Endothelial cell of umbilical vein (primary cell): ENCODE measurements at regions of chr1 and their contacts with region 1.

Region 1: DNA sequence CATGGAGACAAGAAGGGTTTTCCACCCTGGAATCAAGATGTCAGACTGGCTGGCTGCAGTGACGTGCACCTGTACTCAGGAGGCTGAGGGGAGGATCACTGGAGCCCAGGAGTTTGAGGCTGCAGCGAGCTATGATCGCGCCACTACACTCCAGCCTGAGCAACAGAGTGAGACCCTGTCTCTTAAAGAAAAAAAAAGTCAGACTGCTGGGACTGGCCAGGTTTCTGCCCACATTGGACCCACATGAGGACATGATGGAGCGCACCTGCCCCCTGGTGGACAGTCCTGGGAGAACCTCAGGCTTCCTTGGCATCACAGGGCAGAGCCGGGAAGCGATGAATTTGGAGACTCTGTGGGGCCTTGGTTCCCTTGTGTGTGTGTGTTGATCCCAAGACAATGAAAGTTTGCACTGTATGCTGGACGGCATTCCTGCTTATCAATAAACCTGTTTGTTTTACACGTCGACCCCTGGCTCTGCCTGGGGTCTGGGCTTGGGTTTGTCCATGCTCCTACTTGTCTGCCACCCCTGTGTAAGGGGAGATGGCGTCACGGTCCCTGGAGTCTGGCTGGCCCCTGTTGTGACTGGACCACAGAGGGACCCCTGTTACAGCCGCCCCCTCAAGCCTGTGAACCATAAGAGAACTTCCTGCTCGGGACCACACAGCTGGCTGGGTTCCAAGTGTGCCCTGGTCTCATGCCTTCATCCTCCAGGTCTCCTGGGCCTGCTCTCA is 20.9 kb upstream of the VPS13D start:
- DNase-seq: peak; percentile 84
- H3K4me3 ChIP-seq: no peak overlapping the region
- H3K27ac ChIP-seq: no peak overlapping the region
- H3K4me1 ChIP-seq: no peaks in the 10 kb centered on the region
- H3K27me3 ChIP-seq: no peaks in the 10 kb centered on the region
- CTCF ChIP-seq: peak; percentile 87 to 92
- POLR2A ChIP-seq: no peak

Region 2: DNA sequence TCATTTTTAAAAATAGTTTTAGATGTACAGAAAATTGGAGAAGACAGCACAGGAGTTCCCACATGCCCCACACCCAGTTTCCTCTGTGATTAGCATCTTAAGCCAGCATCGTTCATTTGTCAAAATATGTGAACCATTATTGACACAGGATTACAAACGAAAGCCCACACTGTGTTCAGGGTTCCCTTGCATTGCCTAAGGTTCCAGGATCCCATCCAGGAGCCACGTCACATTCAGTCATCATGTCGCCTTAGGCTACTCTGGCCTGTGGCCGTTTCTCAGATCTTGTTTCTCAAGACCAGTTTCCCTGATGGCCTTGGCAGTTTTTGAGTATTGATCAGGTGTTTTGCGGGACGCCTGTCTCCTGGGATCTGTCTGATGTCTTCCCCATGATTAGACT is 76.8 kb before region 1 on chr1:
- CTCF ChIA-PET with region 1: interaction called, 537 read pairs
- POLR2A ChIA-PET with region 1: interaction called, 11 read pairs
- dilution Hi-C with region 1: no loop called
- intact Hi-C with region 1: no loop called
- DNase-seq: no peak
- H3K4me3 ChIP-seq: no peak overlapping the region
- H3K27ac ChIP-seq: no peak overlapping the region
- H3K4me1 ChIP-seq: peaks cover 8% of the 10 kb centered on the region
- H3K27me3 ChIP-seq: no peaks in the 10 kb centered on the region
- CTCF ChIP-seq: no peak
- POLR2A ChIP-seq: no peak

Region 3: GRCh38 chr1:12184008-12184681 is 24.8 kb before region 1 on chr1:
- CTCF ChIA-PET with region 1: interaction called, 4 read pairs
- POLR2A ChIA-PET with region 1: no interaction called
- dilution Hi-C with region 1: no loop called
- intact Hi-C with region 1: loop called (anchors 1 kb)
- DNase-seq: peak; percentile 93
- H3K4me3 ChIP-seq: no peak overlapping the region
- H3K27ac ChIP-seq: peak overlapping the region; percentile 90
- H3K4me1 ChIP-seq: peaks cover 31% of the 10 kb centered on the region
- H3K27me3 ChIP-seq: no peaks in the 10 kb centered on the region
- CTCF ChIP-seq: peak; percentile 42 to 55
- POLR2A ChIP-seq: no peak

Region 4: DNA sequence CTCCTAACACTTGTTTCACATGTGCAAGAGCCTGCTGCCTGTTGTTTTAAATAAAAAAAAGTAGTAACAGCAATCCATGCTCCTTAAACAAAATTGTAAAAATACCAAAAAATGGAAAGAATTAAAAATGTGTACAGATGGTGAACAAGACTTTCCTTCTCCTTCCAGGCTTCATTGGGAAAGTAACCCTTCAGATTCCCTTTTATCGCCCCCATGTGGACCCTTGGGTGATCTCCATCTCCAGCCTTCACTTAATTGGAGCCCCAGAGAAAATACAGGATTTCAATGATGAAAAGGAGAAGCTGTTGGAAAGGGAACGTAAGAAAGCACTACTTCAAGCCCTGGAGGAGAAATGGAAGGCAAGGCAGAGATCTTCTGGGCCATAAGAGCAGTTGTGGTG is 35.1 kb after region 1 on chr1:
- CTCF ChIA-PET with region 1: no interaction called
- POLR2A ChIA-PET with region 1: no interaction called
- dilution Hi-C with region 1: no loop called
- intact Hi-C with region 1: loop called (anchors 1 kb)
- DNase-seq: peak; percentile 35
- H3K4me3 ChIP-seq: no peak overlapping the region
- H3K27ac ChIP-seq: no peak overlapping the region
- H3K4me1 ChIP-seq: no peaks in the 10 kb centered on the region
- H3K27me3 ChIP-seq: no peaks in the 10 kb centered on the region
- CTCF ChIP-seq: peak; percentile 53 to 62
- POLR2A ChIP-seq: no peak

Region 5: DNA sequence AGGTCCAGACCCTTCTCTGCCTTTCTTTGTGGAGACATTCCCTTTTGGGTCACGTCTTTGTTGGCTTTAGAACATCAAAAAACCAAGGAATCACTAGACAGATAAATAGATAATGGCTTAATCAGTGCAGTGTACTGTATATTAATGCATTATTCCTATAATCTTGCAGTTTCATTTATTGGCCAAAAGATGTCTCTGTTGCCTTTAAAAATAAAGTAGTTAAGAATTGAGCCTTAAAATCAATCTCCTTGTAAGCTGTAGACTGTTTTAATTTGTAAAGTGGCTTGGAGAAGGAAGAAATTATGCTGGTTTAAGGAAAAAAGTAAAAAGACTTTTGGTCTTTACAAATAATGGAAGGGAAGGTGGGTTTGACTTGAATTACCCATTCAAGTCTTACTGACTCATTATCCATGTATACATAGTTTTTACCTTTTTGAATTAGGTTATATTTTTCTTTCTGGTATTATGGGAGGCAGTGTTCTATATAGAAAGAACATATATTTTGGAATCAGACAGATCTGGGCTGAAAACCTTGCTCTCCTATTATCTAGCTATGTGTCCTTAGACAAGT is 105.5 kb after region 1 on chr1:
- CTCF ChIA-PET with region 1: no interaction called
- POLR2A ChIA-PET with region 1: no interaction called
- dilution Hi-C with region 1: no loop called
- intact Hi-C with region 1: no loop called
- DNase-seq: peak; percentile 42
- H3K4me3 ChIP-seq: no peak overlapping the region
- H3K27ac ChIP-seq: no peak overlapping the region
- H3K4me1 ChIP-seq: no peaks in the 10 kb centered on the region
- H3K27me3 ChIP-seq: no peaks in the 10 kb centered on the region
- CTCF ChIP-seq: peak; percentile 10 to 19
- POLR2A ChIP-seq: no peak